CD4-positive, alpha-beta T cell (primary cell): ENCODE measurements at regions of chr22 and their contacts with region 1.

Region 1: DNA sequence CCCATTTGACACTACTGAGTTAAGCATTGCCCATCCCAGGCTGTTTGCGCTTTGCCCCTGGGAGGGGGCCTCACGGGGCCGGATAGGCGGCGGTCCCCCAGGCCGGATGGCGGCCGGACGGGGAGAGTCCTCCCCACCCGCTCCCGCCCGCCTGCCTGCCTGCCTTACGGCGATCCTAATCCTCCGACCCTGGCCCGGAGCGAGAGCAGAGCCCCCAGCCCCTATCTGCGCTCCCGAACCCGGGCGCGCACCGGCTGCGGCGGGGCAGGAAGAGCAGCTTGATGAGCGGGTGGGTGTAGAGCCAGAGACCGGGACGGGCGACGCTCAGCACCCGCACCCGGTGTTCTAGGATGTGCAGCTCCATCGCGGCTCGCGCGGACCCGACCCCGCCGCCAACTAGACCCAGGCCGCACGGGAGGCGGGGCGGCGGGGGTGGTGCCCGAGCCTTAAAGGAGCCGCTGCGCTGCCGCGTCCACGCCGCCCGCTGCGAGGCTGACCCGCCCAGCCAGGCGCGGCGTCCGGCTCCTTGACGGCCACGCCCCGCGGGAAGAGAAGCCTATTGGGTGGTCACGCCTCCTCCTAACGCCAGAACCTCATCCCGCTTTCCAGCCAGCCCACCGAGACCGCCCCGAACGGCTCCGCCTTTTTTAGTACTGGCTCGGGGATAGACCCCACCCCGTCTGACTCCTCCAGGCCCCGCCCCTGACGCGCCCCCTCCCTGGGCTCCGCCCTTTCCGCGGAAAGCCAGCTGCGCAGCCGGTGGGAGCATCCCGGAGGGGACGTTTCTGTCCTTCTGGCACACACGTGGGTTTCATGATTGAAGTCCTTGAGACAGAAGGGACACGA is at the start of gene CASTOR1:
- DNase-seq: peak; percentile 75 to 96 (median 86)
- ATAC-seq: peak; percentile 78
- H3K4me3 ChIP-seq: peak within 1 kb of the TSS; percentile 75
- H3K4me3 Mint-ChIP-seq: peak within 1 kb of the TSS; percentile 97
- H3K27ac ChIP-seq: peak within 1 kb of the TSS; percentile 51 to 60
- H3K27ac Mint-ChIP-seq: peak within 1 kb of the TSS; percentile 89
- H3K4me1 ChIP-seq: peaks cover 54% of the 10 kb centered on the region
- H3K4me1 Mint-ChIP-seq: peaks cover 55% of the 10 kb centered on the region
- H3K27me3 ChIP-seq: no peaks in the 10 kb centered on the region
- H3K27me3 Mint-ChIP-seq: no peaks in the 10 kb centered on the region
- CTCF ChIP-seq: no peak
- total RNA-seq, gene CASTOR1: 7.9 to 8.8 TPM

Region 2: DNA sequence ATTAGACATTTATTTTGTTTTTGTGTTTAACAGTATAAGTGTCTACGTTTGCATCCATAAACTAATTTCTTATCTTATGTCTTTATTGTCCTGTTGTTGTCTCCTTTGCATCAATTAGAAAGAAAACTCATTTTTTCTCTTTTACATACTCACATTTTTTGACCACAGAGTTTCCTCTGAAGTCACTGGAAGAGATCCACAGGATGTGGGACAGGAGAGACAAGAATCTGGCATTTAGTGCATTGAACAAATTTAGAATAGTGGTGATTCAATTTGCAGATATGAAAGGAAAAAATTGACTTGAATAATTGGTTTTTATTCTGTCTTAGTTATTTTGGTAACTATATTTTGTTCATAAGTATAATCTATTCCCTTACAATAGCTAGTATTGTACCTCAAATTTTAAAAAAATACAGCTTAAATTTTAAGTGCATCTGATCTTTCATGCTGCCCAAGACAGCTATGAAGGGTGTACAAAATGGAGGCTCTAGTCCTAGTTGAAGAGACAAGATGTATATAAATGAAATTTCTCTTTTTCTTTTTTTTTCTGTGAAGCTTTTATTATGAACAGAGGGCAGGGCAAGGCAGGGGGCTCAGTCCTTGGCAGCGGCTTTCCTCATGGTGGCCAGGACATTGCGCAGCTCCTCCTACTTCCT is 184.7 kb before region 1 on chr22:
- CTCF ChIA-PET with region 1: interaction called, 3 read pairs
- POLR2A ChIA-PET with region 1: interaction called, 7 read pairs
- intact Hi-C with region 1: loop called (anchors 1 kb)
- DNase-seq: peak in 3 of 14 experiments; percentile 23 to 66 (median 35)
- ATAC-seq: peak; percentile 69
- H3K4me3 ChIP-seq: no peak overlapping the region
- H3K4me3 Mint-ChIP-seq: no peak overlapping the region
- H3K27ac ChIP-seq: no peak overlapping the region
- H3K27ac Mint-ChIP-seq: no peak overlapping the region
- H3K4me1 ChIP-seq: peaks cover 7% of the 10 kb centered on the region
- H3K4me1 Mint-ChIP-seq: peaks cover 35% of the 10 kb centered on the region
- H3K27me3 ChIP-seq: no peaks in the 10 kb centered on the region
- H3K27me3 Mint-ChIP-seq: no peaks in the 10 kb centered on the region
- CTCF ChIP-seq: no peak

Region 3: DNA sequence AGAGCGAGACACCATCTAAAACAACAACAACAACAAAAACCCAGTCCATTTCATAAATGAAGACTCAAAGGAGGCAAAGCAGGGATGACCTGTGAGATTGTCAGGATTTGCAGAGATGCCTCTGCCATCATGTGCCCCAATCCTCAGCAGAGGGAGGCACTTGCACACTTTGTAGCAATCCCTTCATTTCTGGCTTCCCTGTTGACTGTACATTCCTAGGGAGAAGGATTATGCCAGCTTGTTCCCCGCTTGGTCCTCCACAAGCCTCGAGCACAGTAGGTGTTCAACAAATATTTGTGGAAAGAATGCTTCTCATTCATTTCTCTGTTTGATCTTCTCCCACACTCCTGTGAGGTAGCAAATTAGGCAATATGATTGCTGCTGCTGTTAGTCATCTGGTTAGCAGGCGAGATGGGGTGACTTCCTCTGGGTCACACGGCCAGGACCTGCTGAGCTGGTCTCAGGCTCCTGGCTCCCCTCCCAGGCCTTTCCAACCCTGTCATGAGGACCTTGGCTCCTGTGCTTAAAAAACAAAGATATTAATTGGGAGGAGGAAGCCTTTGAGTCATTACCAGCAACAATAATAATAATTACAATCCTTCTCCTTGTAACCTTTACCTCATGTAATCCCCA is 76.9 kb before region 1 on chr22:
- CTCF ChIA-PET with region 1: no interaction called
- POLR2A ChIA-PET with region 1: no interaction called
- intact Hi-C with region 1: no loop called
- DNase-seq: peak in 2 of 14 experiments; percentile 56 to 67
- ATAC-seq: no peak
- H3K4me3 ChIP-seq: no peak overlapping the region
- H3K4me3 Mint-ChIP-seq: no peak overlapping the region
- H3K27ac ChIP-seq: no peak overlapping the region
- H3K27ac Mint-ChIP-seq: no peak overlapping the region
- H3K4me1 ChIP-seq: peaks cover 18% of the 10 kb centered on the region
- H3K4me1 Mint-ChIP-seq: peaks cover 16% of the 10 kb centered on the region
- H3K27me3 ChIP-seq: no peaks in the 10 kb centered on the region
- H3K27me3 Mint-ChIP-seq: no peaks in the 10 kb centered on the region
- CTCF ChIP-seq: no peak

Region 4: DNA sequence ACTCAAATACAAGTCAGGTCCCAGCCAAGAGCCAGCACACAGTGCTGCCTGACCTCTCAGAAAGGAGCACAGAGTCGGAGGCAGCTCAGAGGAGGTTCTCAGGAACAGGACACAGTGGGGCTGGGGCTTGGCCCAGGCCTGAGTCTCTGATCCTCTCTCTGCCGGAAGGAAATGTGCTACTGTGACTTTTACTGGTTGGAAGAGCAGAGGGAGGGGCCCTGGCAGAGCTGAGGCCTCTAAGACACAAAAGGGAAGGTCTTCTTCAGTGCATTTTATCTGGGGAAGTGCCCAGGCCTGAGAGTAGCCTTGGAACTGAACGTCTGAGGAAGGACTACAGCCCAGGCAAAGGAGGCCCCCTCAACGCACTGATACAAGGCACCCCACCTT is 16.2 kb after region 1 on chr22:
- CTCF ChIA-PET with region 1: interaction called, 59 read pairs
- POLR2A ChIA-PET with region 1: interaction called, 268 read pairs
- intact Hi-C with region 1: loop called (anchors 1 to 2 kb)
- DNase-seq: peak in 12 of 14 experiments; percentile 29 to 88 (median 54)
- ATAC-seq: peak; percentile 63
- H3K4me3 ChIP-seq: peak overlapping the region; percentile 34
- H3K4me3 Mint-ChIP-seq: peak overlapping the region; percentile 49
- H3K27ac ChIP-seq: peak overlapping the region; percentile 74 to 81
- H3K27ac Mint-ChIP-seq: peak overlapping the region; percentile 83
- H3K4me1 ChIP-seq: peaks cover 97% of the 10 kb centered on the region
- H3K4me1 Mint-ChIP-seq: peaks cover 97% of the 10 kb centered on the region
- H3K27me3 ChIP-seq: no peaks in the 10 kb centered on the region
- H3K27me3 Mint-ChIP-seq: no peaks in the 10 kb centered on the region
- CTCF ChIP-seq: no peak

Region 5: DNA sequence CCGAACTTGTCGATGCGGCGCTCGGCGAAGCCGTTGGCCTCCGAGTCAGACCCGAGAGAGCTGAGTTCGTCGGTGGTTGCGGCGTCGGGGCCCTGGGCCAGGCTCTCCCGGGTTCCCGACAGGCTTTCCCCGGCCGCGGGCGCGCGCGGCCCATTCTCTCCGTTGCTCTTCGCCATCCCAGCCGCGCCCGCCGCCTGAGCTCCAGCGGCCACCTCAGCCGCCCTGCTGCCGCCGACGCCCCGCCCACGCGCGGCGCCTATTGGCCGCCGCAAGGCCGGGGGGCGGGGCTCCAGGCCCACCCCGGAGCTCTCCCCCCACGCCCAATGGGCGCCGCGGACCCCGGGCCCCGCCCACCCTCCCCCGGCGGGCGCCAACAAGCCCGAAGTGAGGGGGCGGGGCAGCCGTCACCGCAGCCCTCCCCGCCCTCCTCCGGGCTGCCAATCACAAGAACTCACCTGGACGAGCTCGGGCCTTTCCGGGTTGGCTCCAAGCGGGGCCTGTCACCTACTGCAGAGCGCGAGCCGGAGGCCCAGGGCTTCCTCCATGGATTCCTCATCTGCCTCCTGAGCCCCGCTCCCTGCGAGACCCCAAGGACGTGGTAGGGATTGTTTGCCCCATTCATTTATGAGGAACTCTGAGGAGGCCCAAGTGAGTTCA is 37.5 kb after region 1 on chr22 and contains the start of gene TBC1D10A:
- CTCF ChIA-PET with region 1: interaction called, 43 read pairs
- POLR2A ChIA-PET with region 1: interaction called, 134 read pairs
- intact Hi-C with region 1: loop called (anchors 1 kb)
- DNase-seq: peak; percentile 84 to 98 (median 94)
- ATAC-seq: peak; percentile 89
- H3K4me3 ChIP-seq: peak within 1 kb of the TSS; percentile 71
- H3K4me3 Mint-ChIP-seq: peak within 1 kb of the TSS; percentile 93
- H3K27ac ChIP-seq: peak within 1 kb of the TSS; percentile 63 to 74
- H3K27ac Mint-ChIP-seq: peak within 1 kb of the TSS; percentile 97
- H3K4me1 ChIP-seq: peaks cover 54% of the 10 kb centered on the region
- H3K4me1 Mint-ChIP-seq: peaks cover 51% of the 10 kb centered on the region
- H3K27me3 ChIP-seq: no peaks in the 10 kb centered on the region
- H3K27me3 Mint-ChIP-seq: no peaks in the 10 kb centered on the region
- CTCF ChIP-seq: no peak
- total RNA-seq, gene TBC1D10A: 38.9 to 41.8 TPM

Region 6: GRCh38 chr22:30485362-30485988 is 196.1 kb after region 1 on chr22:
- CTCF ChIA-PET with region 1: interaction called, 5 read pairs
- POLR2A ChIA-PET with region 1: no interaction called
- intact Hi-C with region 1: loop called (anchors 2 kb)
- DNase-seq: peak; percentile 58 to 88 (median 74)
- ATAC-seq: peak; percentile 98
- H3K4me3 ChIP-seq: no peak overlapping the region
- H3K4me3 Mint-ChIP-seq: no peak overlapping the region
- H3K27ac ChIP-seq: no peak overlapping the region
- H3K27ac Mint-ChIP-seq: no peak overlapping the region
- H3K4me1 ChIP-seq: peaks cover 6% of the 10 kb centered on the region
- H3K4me1 Mint-ChIP-seq: no peaks in the 10 kb centered on the region
- H3K27me3 ChIP-seq: peaks cover 0 to 2% of the 10 kb centered on the region in 2 experiments
- H3K27me3 Mint-ChIP-seq: peaks cover 5% of the 10 kb centered on the region
- CTCF ChIP-seq: peak; percentile 98

Region 7: GRCh38 chr22:30562366-30562765 is 273.0 kb after region 1 on chr22:
- CTCF ChIA-PET with region 1: no interaction called
- POLR2A ChIA-PET with region 1: no interaction called
- intact Hi-C with region 1: no loop called
- DNase-seq: no peak
- ATAC-seq: no peak
- H3K4me3 ChIP-seq: no peak overlapping the region
- H3K4me3 Mint-ChIP-seq: no peak overlapping the region
- H3K27ac ChIP-seq: no peak overlapping the region
- H3K27ac Mint-ChIP-seq: no peak overlapping the region
- H3K4me1 ChIP-seq: no peaks in the 10 kb centered on the region
- H3K4me1 Mint-ChIP-seq: no peaks in the 10 kb centered on the region
- H3K27me3 ChIP-seq: peaks cover 0 to 2% of the 10 kb centered on the region in 2 experiments
- H3K27me3 Mint-ChIP-seq: peaks cover 6% of the 10 kb centered on the region
- CTCF ChIP-seq: no peak

Region 8: GRCh38 chr22:30763815-30764686 is 474.7 kb after region 1 on chr22:
- CTCF ChIA-PET with region 1: no interaction called
- POLR2A ChIA-PET with region 1: no interaction called
- intact Hi-C with region 1: no loop called
- DNase-seq: peak; percentile 5 to 80 (median 37)
- ATAC-seq: peak; percentile 71
- H3K4me3 ChIP-seq: no peak overlapping the region
- H3K4me3 Mint-ChIP-seq: no peak overlapping the region
- H3K27ac ChIP-seq: no peak overlapping the region
- H3K27ac Mint-ChIP-seq: no peak overlapping the region
- H3K4me1 ChIP-seq: peaks cover 4% of the 10 kb centered on the region
- H3K4me1 Mint-ChIP-seq: no peaks in the 10 kb centered on the region
- H3K27me3 ChIP-seq: no peaks in the 10 kb centered on the region
- H3K27me3 Mint-ChIP-seq: no peaks in the 10 kb centered on the region
- CTCF ChIP-seq: peak; percentile 55